Spleen (tissue), 13 donors: ENCODE measurements at regions of chr1 and their contacts with region 1.

Region 1: DNA sequence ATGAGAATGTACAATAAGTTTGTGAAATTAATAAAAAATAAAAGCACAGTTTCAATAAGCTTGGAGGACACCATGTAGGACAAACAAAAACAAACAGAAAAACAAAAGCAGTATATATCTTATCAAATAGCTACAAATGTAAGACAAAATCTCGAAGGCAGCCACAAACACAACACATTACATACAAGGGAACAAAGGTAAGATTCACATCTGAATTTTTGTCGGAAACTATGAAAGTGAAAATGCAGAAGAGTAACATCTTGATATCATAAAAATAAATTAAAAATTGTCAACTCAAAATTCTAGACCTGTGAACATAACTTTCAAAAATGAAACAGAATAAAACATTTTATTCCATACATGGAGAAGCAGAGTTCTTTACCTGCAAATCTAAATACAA is 1049.5 kb upstream of the ADGRL2 start:
- DNase-seq: no peak
- H3K4me3 ChIP-seq: no peak overlapping the region
- H3K27ac ChIP-seq: no peak overlapping the region
- H3K4me1 ChIP-seq: no peaks in the 10 kb centered on the region
- H3K27me3 ChIP-seq: no peaks in the 10 kb centered on the region
- CTCF ChIP-seq: no peak
- POLR2A ChIP-seq: no peak

Region 2: DNA sequence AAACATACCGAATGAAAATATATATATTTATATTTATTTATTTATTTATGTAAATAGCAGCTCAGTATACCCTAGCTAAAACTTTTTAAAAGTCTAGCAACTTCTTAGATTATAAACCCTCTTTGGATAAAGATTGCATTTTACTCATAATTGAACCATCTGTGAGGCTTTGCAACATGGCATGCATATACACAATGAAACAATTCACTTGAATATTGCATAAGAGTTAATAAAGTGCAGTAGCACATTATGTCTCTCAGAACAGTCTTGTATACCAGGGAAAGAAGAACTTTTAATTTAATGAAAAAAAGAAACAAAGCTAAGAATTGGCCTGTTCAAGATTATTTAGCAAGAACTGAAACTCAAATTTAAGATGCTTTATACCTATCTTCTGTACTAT is 314.4 kb before region 1 on chr1:
- intact Hi-C with region 1: no loop called
- DNase-seq: no peak
- H3K4me3 ChIP-seq: no peak overlapping the region
- H3K27ac ChIP-seq: no peak overlapping the region
- H3K4me1 ChIP-seq: no peaks in the 10 kb centered on the region
- H3K27me3 ChIP-seq: no peaks in the 10 kb centered on the region
- CTCF ChIP-seq: no peak
- POLR2A ChIP-seq: no peak

Region 3: GRCh38 chr1:80801691-80802090 is 50.5 kb after region 1 on chr1:
- intact Hi-C with region 1: loop called (anchors 5 kb)
- DNase-seq: no peak
- H3K4me3 ChIP-seq: no peak overlapping the region
- H3K27ac ChIP-seq: no peak overlapping the region
- H3K4me1 ChIP-seq: no peaks in the 10 kb centered on the region
- H3K27me3 ChIP-seq: no peaks in the 10 kb centered on the region
- CTCF ChIP-seq: no peak
- POLR2A ChIP-seq: no peak

Region 4: DNA sequence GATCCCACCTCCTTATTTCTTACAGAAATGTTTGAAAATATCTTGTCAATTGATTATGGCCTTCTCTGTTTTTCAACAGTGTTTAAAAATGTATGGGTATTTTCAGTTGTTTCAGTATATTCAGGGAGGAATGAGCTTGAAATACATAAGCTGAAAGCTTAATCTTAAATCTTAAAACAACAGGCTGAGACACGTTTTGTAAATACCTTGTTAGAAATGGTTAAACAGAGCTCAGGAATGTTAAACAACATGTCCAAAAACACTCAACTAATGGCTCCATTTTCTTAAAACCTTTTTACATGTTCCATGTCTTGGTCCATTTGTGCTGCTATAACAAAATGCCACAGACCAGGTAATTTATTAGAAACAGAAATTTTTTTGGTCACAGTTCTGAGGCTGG is 95.8 kb after region 1 on chr1:
- intact Hi-C with region 1: no loop called
- DNase-seq: no peak
- H3K4me3 ChIP-seq: no peak overlapping the region
- H3K27ac ChIP-seq: no peak overlapping the region
- H3K4me1 ChIP-seq: no peaks in the 10 kb centered on the region
- H3K27me3 ChIP-seq: no peaks in the 10 kb centered on the region
- CTCF ChIP-seq: no peak
- POLR2A ChIP-seq: no peak